ENCODE measurements at regions of chr3 and their contacts with region 1.

Region 1: DNA sequence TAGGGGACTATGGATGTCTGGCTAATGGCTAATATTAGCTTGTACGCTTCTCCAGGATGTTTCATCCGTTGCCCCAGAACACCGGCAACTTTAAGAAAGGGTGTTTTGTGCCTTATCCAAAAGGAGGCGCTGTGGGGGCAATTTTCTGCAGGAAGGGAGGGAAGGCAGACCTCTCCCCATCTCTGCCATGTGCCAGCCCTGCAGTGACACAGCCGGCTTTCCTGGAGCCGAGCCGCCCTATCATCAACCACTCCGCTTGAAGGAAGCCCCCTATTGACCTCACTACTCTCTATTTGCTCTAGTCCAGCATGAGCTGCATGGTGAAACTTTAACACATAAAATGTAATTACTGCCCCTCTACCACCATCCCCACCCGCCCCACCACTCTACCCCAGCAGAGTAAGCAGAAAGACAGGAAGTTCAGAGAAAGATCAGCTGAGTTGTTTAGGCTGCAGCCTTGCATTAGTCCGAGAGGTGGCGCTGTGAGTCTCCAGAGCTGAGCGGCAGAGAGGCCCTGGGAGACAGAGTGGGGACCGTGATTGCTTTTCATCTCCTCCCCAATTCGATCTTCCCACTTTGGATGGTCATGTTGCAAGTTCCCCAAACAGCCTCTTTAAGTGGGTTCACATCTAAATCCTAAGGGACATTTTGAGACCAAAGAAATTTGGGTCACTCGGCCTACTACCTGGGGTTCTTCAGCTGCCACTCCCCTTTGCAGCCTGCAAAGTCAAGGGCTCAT is 24.5 kb upstream of the RAD18 start:
- DNase-seq: peak; percentile 74
- ATAC-seq: peak; percentile 87
- H3K4me3 Mint-ChIP-seq: no peak overlapping the region
- H3K27ac Mint-ChIP-seq: no peak overlapping the region
- H3K4me1 Mint-ChIP-seq: no peaks in the 10 kb centered on the region
- H3K27me3 Mint-ChIP-seq: peaks cover 2% of the 10 kb centered on the region

Region 2: GRCh38 chr3:8970971-8971589 is 16.7 kb before region 1 on chr3:
- CTCF ChIA-PET with region 1: interaction called, 39 read pairs
- DNase-seq: peak; percentile 80
- ATAC-seq: peak; percentile 78
- H3K4me3 Mint-ChIP-seq: no peak overlapping the region
- H3K27ac Mint-ChIP-seq: no peak overlapping the region
- H3K4me1 Mint-ChIP-seq: peaks cover 4% of the 10 kb centered on the region
- H3K27me3 Mint-ChIP-seq: peaks cover 17% of the 10 kb centered on the region

Region 3: DNA sequence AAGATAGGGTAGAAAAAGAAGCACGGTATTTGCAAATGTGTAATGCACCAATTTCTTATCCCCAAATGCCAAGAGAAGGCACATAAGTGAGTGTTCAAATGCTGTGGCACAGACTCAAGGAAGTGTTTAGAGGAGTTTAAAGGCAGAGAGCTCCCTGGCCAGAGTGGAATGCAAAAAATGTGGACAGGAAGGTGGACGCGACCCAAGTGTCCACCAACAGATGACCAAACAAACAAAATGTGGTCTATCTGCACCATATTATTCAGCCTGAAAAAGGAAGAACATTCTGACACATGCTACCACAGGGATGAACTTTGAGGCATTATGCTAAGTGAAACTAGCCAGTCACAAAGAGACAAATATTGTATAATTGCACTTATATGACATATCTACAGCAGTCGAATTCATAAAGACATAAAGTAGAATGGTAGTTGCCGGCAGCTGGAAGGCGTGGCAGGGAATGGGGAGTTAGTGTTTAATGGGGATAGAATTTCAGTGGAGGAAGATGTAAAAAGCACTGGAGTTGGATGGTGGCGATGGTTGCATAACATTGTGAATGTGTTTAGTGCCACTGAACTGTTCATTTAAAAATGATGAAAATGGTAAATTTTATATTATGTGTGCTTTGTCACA is 135.0 kb after region 1 on chr3:
- CTCF ChIA-PET with region 1: no interaction called
- DNase-seq: no peak
- ATAC-seq: no peak
- H3K4me3 Mint-ChIP-seq: no peak overlapping the region
- H3K27ac Mint-ChIP-seq: no peak overlapping the region
- H3K4me1 Mint-ChIP-seq: peaks cover 5% of the 10 kb centered on the region
- H3K27me3 Mint-ChIP-seq: no peaks in the 10 kb centered on the region

Region 4: DNA sequence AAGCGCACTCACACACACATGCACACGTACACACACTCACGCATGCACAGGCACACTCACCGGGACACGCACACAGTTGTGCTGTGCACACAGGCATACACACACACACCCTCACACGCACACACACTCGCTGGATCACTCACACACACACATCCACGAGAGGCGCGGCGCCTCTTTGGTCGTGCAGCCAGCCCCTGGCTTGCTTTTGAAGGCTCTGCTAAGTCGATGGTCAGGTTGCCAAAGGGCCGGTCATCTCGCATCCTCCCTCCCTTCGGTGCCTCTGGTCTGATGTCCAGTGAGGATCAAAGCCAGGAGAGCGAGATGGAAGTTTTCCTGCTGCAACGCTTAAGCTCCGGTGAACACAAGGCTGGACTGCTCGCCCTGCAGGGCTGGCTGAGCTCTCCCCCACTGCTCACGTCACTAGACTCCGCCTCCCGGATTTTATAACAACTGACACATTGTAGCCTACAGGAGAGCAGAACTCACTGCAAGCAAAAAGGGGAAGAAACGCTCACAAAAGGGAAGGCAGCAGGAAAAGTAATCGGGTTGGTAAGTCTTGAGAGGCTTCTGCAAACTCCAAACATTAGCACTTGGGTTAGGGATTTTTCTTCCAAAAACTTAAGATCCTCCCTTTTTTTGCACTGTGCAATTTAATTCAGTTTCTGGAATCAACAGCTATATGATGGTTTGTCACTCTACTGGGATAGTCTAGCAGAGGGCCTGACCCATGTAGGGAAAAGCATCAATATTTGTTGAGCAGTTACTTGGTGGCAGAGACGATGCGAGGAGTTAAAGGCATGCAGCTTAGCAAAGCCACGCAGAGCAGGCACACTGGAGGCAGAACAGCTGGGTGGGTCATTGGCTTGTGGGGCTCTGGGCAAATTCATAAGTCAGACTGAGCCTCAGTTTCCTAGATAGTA is 261.7 kb after region 1 on chr3 and contains the start of gene SRGAP3:
- CTCF ChIA-PET with region 1: interaction called, 14 read pairs
- DNase-seq: peak; percentile 90
- ATAC-seq: peak; percentile 100
- H3K4me3 Mint-ChIP-seq: peak within 1 kb of the TSS; percentile 73
- H3K27ac Mint-ChIP-seq: no peak within 1 kb of the TSS
- H3K4me1 Mint-ChIP-seq: peaks cover 21% of the 10 kb centered on the region
- H3K27me3 Mint-ChIP-seq: peaks cover 44% of the 10 kb centered on the region
- total RNA-seq, gene SRGAP3: 2.8 to 3.2 TPM